ENCODE measurements at regions of chr7 and their contacts with region 1.

Region 1: GRCh38 chr7:90403174-90404113 is at the start of gene CLDN12:
- DNase-seq: peak; percentile 88 to 93
- ATAC-seq: peak; percentile 96
- H3K4me3 ChIP-seq: peak within 1 kb of the TSS; percentile 71 to 94
- H3K27ac ChIP-seq: peak within 1 kb of the TSS; percentile 55 to 70
- H3K4me1 ChIP-seq: peaks cover 0 to 3% of the 10 kb centered on the region in 2 donors
- H3K27me3 ChIP-seq: no peaks in the 10 kb centered on the region
- total RNA-seq, gene CLDN12: 29.0 to 35.1 TPM

Region 2: DNA sequence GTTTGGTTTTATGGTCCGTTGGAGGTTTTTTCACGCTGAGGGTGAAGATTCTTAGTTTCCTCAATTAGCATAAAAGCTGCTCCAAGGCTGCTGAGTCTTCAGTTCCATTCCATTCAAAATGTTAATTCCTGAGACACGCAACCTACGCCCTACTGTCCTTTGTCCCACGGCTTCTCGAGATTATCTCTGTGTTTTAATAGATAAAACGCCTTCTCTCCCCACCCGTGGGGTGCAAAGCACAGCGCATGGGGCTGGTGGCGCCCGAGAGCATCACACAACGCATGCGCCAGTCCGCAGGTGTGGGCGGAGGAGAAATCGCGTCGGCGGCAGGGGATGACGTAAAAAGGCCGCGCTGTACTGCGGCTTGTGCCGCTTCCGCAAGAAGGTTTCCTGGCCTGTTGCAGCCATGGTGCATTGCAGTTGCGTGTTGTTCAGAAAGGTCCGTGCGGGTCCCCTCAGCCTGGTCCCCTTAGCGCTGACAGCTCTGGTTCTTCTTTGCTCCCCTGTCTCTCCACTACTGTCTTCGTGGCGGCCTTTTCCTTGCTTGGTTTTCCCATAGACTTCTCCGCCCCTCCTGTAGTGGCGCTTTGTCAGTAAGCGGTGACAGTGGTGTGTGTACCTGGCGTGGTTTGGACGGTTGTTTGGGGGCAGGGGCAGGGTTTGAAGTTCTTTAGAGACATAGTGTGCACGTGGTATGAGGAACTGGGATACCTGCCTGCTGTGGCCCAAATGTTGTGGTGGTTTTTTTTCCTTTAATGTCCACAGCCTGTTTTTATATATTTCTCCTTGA is 56.9 kb before region 1 on chr7 and contains the start of gene GTPBP10:
- intact Hi-C with region 1: loop called (anchors 1 to 2 kb)
- DNase-seq: peak; percentile 96 to 98
- ATAC-seq: peak; percentile 100
- H3K4me3 ChIP-seq: peak within 1 kb of the TSS; percentile 54 to 94
- H3K27ac ChIP-seq: peak within 1 kb of the TSS; percentile 71 to 93
- H3K4me1 ChIP-seq: no peaks in the 10 kb centered on the region
- H3K27me3 ChIP-seq: no peaks in the 10 kb centered on the region
- total RNA-seq, gene GTPBP10: 18.2 to 24.6 TPM